T-cell (primary cell): ENCODE measurements at regions of chr7 and their contacts with region 1.

Region 1: DNA sequence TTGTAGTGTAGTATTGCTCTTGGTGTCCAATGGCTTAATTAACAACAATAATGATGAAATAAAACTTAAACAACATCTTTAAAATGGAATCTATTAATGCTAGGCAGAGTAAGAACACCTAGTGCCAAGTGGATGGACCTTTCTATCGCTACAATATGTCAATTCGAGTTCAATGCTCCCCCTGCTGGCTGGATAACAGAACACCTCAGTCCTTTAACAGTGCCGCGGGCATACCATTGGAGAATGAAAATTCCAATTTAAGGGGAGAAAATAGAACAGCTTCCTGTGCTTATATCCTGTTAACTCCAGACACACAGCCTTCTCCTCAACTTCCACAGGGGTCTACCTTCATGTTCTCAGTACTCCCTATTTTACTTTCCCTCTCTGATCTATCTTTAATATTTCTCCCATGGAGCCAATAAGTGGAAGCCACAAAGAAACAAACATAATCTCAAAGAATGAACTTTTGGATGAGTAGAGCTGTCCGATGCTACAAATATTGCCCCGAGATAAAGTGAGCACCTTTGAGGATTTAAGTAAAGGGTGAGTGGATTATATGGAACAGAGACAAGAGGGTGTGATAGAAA is 41.4 kb downstream of the COL1A2 start:
- DNase-seq: peak in 32 of 35 experiments; percentile 3 to 70 (median 28)
- ATAC-seq: peak in 2 of 4 experiments; percentile 62 to 67
- H3K4me3 ChIP-seq: no peak overlapping the region
- H3K4me3 Mint-ChIP-seq: no peak overlapping the region
- H3K27ac ChIP-seq: no peak overlapping the region
- H3K27ac Mint-ChIP-seq: no peak overlapping the region
- H3K4me1 ChIP-seq: no peaks in the 10 kb centered on the region
- H3K4me1 Mint-ChIP-seq: peaks cover 0 to 4% (median 3%) of the 10 kb centered on the region in 3 donors
- H3K27me3 ChIP-seq: peaks cover 0 to 5% of the 10 kb centered on the region in 2 experiments
- H3K27me3 Mint-ChIP-seq: peaks cover 19 to 24% of the 10 kb centered on the region in 2 donors

Region 2: DNA sequence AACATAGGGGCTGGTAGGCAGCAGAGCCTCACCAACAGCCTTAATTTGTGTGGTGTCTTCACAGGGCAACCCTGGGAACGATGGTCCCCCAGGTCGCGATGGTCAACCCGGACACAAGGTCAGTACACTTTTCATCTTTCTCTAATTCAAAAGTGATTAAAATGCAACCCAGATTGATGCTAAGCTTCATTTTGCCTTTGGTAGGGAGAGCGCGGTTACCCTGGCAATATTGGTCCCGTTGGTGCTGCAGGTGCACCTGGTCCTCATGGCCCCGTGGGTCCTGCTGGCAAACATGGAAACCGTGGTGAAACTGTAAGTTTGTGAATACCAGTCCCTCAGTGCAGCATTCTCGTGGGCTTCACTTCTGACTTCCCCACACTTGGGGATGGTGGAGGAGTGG is 10.6 kb before region 1 on chr7:
- CTCF ChIA-PET with region 1: interaction called, 4 to 17 read pairs
- POLR2A ChIA-PET with region 1: no interaction called
- DNase-seq: no peak
- ATAC-seq: no peak
- H3K4me3 ChIP-seq: no peak overlapping the region
- H3K4me3 Mint-ChIP-seq: no peak overlapping the region
- H3K27ac ChIP-seq: no peak overlapping the region
- H3K27ac Mint-ChIP-seq: no peak overlapping the region
- H3K4me1 ChIP-seq: no peaks in the 10 kb centered on the region
- H3K4me1 Mint-ChIP-seq: no peaks in the 10 kb centered on the region
- H3K27me3 ChIP-seq: peaks cover 0 to 8% of the 10 kb centered on the region in 2 experiments
- H3K27me3 Mint-ChIP-seq: peaks cover 5 to 14% of the 10 kb centered on the region in 2 donors